ENCODE measurements at regions of chr3 and their contacts with region 1.

Region 1: GRCh38 chr3:182683453-182683852 is 109.9 kb upstream of the ATP11B start:
- DNase-seq: peak; percentile 21 to 73 (median 45)
- ATAC-seq: peak; percentile 85
- H3K4me3 ChIP-seq: no peak overlapping the region
- H3K4me3 Mint-ChIP-seq: peak overlapping the region; percentile 79
- H3K27ac ChIP-seq: no peak overlapping the region
- H3K27ac Mint-ChIP-seq: no peak overlapping the region
- H3K4me1 ChIP-seq: peaks cover 13% of the 10 kb centered on the region
- H3K4me1 Mint-ChIP-seq: peaks cover 9% of the 10 kb centered on the region
- H3K27me3 ChIP-seq: peaks cover 9 to 45% of the 10 kb centered on the region in 2 experiments
- H3K27me3 Mint-ChIP-seq: peaks cover 65% of the 10 kb centered on the region
- CTCF ChIP-seq: peak; percentile 94

Region 2: DNA sequence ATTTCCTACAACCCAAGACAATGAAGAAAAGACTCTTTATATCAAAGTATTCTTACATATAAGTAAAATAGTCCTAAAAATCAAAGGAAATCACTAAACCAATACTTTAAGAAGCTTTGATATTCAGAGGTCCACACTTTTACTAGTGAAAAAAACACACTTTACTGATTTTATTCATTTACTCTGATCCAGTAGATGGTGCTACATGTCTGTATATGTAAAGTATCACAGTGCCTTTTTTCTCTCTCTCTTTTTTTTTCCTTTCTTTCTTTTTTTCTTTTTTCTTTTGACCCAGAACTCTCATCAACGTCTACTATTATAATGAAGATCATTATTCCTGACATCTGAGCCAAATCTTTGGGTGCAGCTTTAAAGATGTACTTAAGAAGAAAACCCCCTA is 1993.4 kb before region 1 on chr3:
- CTCF ChIA-PET with region 1: no interaction called
- POLR2A ChIA-PET with region 1: no interaction called
- intact Hi-C with region 1: loop called in 1 of 2 experiments (anchors 10 kb)
- DNase-seq: no peak
- ATAC-seq: no peak
- H3K4me3 ChIP-seq: no peak overlapping the region
- H3K4me3 Mint-ChIP-seq: no peak overlapping the region
- H3K27ac ChIP-seq: no peak overlapping the region
- H3K27ac Mint-ChIP-seq: no peak overlapping the region
- H3K4me1 ChIP-seq: no peaks in the 10 kb centered on the region
- H3K4me1 Mint-ChIP-seq: no peaks in the 10 kb centered on the region
- H3K27me3 ChIP-seq: peaks cover 0 to 5% of the 10 kb centered on the region in 2 experiments
- H3K27me3 Mint-ChIP-seq: peaks cover 61% of the 10 kb centered on the region
- CTCF ChIP-seq: no peak

Region 3: DNA sequence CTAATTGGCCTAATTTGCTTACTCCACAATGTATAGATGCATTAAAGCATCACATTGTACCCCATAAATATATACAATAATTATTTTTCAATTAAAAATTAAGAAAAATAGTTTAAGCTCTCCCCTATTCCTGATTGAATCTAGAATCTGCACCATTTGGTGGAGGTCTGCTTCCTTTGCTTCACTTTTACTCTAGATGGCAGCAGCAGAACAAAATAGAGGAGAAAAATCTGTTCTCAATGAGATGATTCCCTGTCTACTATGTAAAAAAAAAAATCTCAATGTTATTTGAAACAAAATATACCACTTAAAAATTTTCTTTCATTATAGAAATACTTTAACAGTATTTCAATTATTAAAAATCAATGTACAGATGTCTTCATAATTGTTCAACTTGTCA is 1880.6 kb before region 1 on chr3:
- CTCF ChIA-PET with region 1: no interaction called
- POLR2A ChIA-PET with region 1: no interaction called
- intact Hi-C with region 1: loop called (anchors 2 to 5 kb)
- DNase-seq: peak in 1 of 14 experiments; percentile 1
- ATAC-seq: no peak
- H3K4me3 ChIP-seq: no peak overlapping the region
- H3K4me3 Mint-ChIP-seq: no peak overlapping the region
- H3K27ac ChIP-seq: no peak overlapping the region
- H3K27ac Mint-ChIP-seq: no peak overlapping the region
- H3K4me1 ChIP-seq: no peaks in the 10 kb centered on the region
- H3K4me1 Mint-ChIP-seq: no peaks in the 10 kb centered on the region
- H3K27me3 ChIP-seq: no peaks in the 10 kb centered on the region
- H3K27me3 Mint-ChIP-seq: peaks cover 18% of the 10 kb centered on the region
- CTCF ChIP-seq: peak; percentile 22

Region 4: DNA sequence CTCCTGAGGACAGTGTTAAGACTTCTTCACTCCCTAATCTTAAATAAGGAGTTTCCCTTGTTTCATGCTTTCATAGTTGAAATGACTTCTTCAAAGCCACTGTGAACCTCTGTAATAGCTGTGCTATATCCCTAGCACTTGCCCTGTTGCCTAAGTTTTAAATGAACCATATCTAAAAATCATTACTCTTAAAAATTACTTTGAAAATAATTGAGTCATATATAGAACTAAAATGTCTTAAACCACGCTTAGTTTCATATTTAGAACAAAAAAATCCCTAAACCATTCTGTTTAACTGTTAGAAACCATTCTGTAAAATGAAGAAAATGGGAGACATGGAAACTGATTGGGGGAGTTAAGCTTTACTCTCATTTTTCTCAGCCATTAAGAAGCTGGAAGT is 1723.8 kb before region 1 on chr3:
- CTCF ChIA-PET with region 1: interaction called, 4 read pairs
- POLR2A ChIA-PET with region 1: no interaction called
- intact Hi-C with region 1: loop called in 1 of 2 experiments (anchors 10 kb)
- DNase-seq: no peak
- ATAC-seq: no peak
- H3K4me3 ChIP-seq: no peak overlapping the region
- H3K4me3 Mint-ChIP-seq: no peak overlapping the region
- H3K27ac ChIP-seq: no peak overlapping the region
- H3K27ac Mint-ChIP-seq: peak overlapping the region; percentile 36
- H3K4me1 ChIP-seq: no peaks in the 10 kb centered on the region
- H3K4me1 Mint-ChIP-seq: no peaks in the 10 kb centered on the region
- H3K27me3 ChIP-seq: no peaks in the 10 kb centered on the region
- H3K27me3 Mint-ChIP-seq: no peaks in the 10 kb centered on the region
- CTCF ChIP-seq: no peak

Region 5: DNA sequence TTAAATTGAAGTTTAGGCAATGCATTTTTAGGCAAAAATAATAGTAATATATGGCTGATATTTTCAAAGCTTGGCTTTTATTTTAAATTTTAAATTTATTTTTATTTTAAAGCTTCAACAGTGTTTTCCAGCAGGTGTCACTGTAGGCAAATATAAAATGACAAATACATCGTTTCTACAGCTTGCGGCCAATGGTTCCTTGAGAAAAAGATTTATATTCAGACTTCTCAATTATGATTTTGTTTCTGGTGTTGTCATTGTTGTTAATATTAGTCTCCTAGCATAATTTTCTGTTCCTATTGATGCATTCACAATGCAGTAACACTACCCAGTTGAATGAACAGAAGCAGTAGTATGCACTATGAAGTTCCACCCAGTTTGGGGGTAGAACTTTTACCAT is 1473.2 kb before region 1 on chr3:
- CTCF ChIA-PET with region 1: no interaction called
- POLR2A ChIA-PET with region 1: no interaction called
- intact Hi-C with region 1: loop called in 1 of 2 experiments (anchors 5 kb)
- DNase-seq: no peak
- ATAC-seq: no peak
- H3K4me3 ChIP-seq: no peak overlapping the region
- H3K4me3 Mint-ChIP-seq: no peak overlapping the region
- H3K27ac ChIP-seq: no peak overlapping the region
- H3K27ac Mint-ChIP-seq: no peak overlapping the region
- H3K4me1 ChIP-seq: no peaks in the 10 kb centered on the region
- H3K4me1 Mint-ChIP-seq: no peaks in the 10 kb centered on the region
- H3K27me3 ChIP-seq: peaks cover 0 to 5% of the 10 kb centered on the region in 2 experiments
- H3K27me3 Mint-ChIP-seq: no peaks in the 10 kb centered on the region
- CTCF ChIP-seq: no peak

Region 6: DNA sequence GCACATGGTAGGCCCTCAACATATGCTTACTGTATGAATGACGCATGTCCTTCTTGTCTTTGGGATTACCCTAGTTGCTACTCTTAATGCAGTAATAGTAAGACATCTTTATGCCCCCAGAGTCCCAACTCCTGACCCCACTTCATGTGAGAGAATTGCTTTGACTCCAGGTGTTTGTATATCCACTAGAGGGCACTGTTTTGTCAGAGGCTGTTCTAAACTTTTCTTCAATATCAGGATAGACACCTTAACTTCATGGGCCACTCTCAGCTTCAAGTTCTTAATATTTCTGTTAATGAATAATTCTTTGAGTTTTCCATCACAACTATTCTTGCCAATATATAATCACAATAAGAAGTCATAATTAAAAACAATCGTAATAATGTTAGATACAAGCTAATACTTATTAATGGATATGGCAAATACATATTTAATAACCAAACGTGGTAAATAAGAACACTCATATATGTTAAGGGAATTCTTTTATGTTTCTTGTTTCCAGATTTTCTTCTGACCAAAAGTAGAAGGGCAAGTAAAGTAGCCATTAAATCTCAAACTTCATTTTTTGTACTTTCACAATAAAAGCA is 1356.7 kb before region 1 on chr3:
- CTCF ChIA-PET with region 1: interaction called, 3 read pairs
- POLR2A ChIA-PET with region 1: no interaction called
- intact Hi-C with region 1: loop called (anchors 1 to 5 kb)
- DNase-seq: peak in 3 of 14 experiments; percentile 3 to 7 (median 4)
- ATAC-seq: no peak
- H3K4me3 ChIP-seq: no peak overlapping the region
- H3K4me3 Mint-ChIP-seq: no peak overlapping the region
- H3K27ac ChIP-seq: no peak overlapping the region
- H3K27ac Mint-ChIP-seq: no peak overlapping the region
- H3K4me1 ChIP-seq: no peaks in the 10 kb centered on the region
- H3K4me1 Mint-ChIP-seq: no peaks in the 10 kb centered on the region
- H3K27me3 ChIP-seq: no peaks in the 10 kb centered on the region
- H3K27me3 Mint-ChIP-seq: peaks cover 3% of the 10 kb centered on the region
- CTCF ChIP-seq: peak; percentile 49

Region 7: GRCh38 chr3:181709537-181710279 is 973.7 kb before region 1 on chr3:
- CTCF ChIA-PET with region 1: interaction called, 4 read pairs
- POLR2A ChIA-PET with region 1: no interaction called
- intact Hi-C with region 1: loop called (anchors 1 to 2 kb)
- DNase-seq: peak in 11 of 14 experiments; percentile 11 to 72 (median 32)
- ATAC-seq: no peak
- H3K4me3 ChIP-seq: no peak overlapping the region
- H3K4me3 Mint-ChIP-seq: peak overlapping the region; percentile 74
- H3K27ac ChIP-seq: no peak overlapping the region
- H3K27ac Mint-ChIP-seq: no peak overlapping the region
- H3K4me1 ChIP-seq: peaks cover 26% of the 10 kb centered on the region
- H3K4me1 Mint-ChIP-seq: peaks cover 11% of the 10 kb centered on the region
- H3K27me3 ChIP-seq: peaks cover 59 to 95% of the 10 kb centered on the region in 2 experiments
- H3K27me3 Mint-ChIP-seq: peaks cover 36% of the 10 kb centered on the region
- CTCF ChIP-seq: peak; percentile 59

Measured in CD4-positive, alpha-beta T cell (primary cell).